Prostate gland (tissue), 2 donors: ENCODE measurements at regions of chr15 and their contacts with region 1.

Region 1: DNA sequence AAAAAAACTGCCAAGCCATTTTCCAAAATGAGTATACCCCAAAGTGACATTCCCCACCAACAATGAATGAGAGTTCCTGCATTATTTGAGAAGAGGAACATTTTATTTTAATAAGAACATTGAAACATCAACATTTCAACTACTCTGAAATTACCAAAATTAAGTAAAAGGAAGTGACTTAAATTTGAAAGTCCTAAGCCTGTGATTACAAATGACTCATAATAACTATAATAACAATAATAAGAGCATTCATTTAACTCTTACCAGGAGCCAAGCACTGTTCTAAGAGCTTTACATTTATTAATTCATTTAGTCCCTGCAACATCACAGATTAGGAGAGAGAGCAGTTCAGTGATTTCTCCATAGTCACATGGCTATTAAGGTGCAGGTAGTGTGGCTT is 32.4 kb downstream of the LRRC28 start:
- DNase-seq: no peak
- H3K4me3 ChIP-seq: no peak overlapping the region
- H3K27ac ChIP-seq: no peak overlapping the region
- H3K4me1 ChIP-seq: no peaks in the 10 kb centered on the region
- H3K27me3 ChIP-seq: no peaks in the 10 kb centered on the region
- CTCF ChIP-seq: no peak
- POLR2A ChIP-seq: no peak

Region 2: DNA sequence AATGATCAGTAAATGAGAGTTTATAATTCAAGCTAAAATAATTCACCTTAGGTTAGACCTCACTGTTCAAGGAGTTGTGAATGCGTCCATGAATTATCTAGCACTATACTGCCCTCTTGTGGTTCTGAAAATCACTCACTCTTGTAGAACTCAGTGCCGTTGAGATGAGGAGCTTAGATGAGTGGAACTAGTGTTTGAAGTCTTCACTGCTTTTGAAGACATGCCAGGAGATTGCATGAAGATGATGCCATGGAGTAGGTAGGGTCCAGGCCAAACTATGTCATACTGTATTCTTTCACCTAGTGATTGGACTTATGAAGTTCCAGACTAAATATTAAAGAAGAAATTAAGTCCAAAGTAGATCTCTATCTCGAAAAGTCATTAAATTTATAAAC is 420.7 kb after region 1 on chr15:
- intact Hi-C with region 1: loop called (anchors 2 kb)
- DNase-seq: peak; percentile 76
- H3K4me3 ChIP-seq: no peak overlapping the region
- H3K27ac ChIP-seq: peak overlapping the region in 1 of 2 donors; percentile 36
- H3K4me1 ChIP-seq: no peaks in the 10 kb centered on the region
- H3K27me3 ChIP-seq: no peaks in the 10 kb centered on the region
- CTCF ChIP-seq: peak; percentile 36 to 88 (median 84)
- POLR2A ChIP-seq: no peak